Transverse colon (tissue), 4 donors: ENCODE measurements at regions of chr17 and their contacts with region 1.

Region 1: GRCh38 chr17:68556556-68556955 is 44.3 kb downstream of the PRKAR1A start:
- DNase-seq: no peak
- H3K4me3 ChIP-seq: no peak overlapping the region
- H3K27ac ChIP-seq: no peak overlapping the region
- H3K4me1 ChIP-seq: no peaks in the 10 kb centered on the region
- H3K27me3 ChIP-seq: no peaks in the 10 kb centered on the region
- CTCF ChIP-seq: no peak
- EP300 ChIP-seq: no peak
- POLR2A ChIP-seq: no peak

Region 2: DNA sequence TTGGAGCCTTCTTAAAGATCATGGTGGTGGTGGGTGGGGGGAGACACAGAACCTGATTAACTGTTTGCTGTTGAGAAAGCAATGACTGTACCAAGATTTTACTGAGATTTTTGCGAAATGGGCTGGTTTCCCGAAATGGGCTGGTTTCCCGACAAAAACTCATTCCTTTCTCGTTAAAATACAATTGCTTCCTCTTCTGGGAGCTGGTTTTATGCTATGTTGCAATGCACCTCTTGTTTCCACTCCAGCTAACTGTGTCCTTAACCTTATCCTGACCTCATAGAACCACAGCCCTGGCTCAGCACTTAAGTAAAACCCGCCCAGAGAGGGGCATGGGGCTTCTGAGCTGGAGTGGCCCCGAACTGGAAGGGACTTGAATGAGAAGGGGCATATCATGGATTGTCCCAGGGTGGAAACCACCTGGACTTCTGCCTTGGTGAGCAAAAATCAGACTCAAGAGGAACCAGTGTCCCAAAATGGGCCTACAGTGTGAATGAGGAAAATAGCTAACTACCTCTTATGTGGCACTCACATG is 23.7 kb after region 1 on chr17:
- in situ Hi-C with region 1: no loop called
- intact Hi-C with region 1: loop called (anchors 2 kb)
- DNase-seq: no peak
- H3K4me3 ChIP-seq: no peak overlapping the region
- H3K27ac ChIP-seq: peak overlapping the region in 3 of 4 donors; percentile 13 to 22 (median 20)
- H3K4me1 ChIP-seq: peaks cover 0 to 6% (median 0%) of the 10 kb centered on the region in 4 donors
- H3K27me3 ChIP-seq: no peaks in the 10 kb centered on the region
- CTCF ChIP-seq: no peak
- EP300 ChIP-seq: no peak
- POLR2A ChIP-seq: no peak

Region 3: GRCh38 chr17:68634403-68634802 is 77.8 kb after region 1 on chr17:
- in situ Hi-C with region 1: no loop called
- intact Hi-C with region 1: no loop called
- DNase-seq: no peak
- H3K4me3 ChIP-seq: no peak overlapping the region
- H3K27ac ChIP-seq: no peak overlapping the region
- H3K4me1 ChIP-seq: no peaks in the 10 kb centered on the region
- H3K27me3 ChIP-seq: no peaks in the 10 kb centered on the region
- CTCF ChIP-seq: no peak
- EP300 ChIP-seq: no peak
- POLR2A ChIP-seq: no peak

Region 4: GRCh38 chr17:69078864-69079263 is 522.3 kb after region 1 on chr17:
- in situ Hi-C with region 1: no loop called
- intact Hi-C with region 1: no loop called
- DNase-seq: no peak
- H3K4me3 ChIP-seq: no peak overlapping the region
- H3K27ac ChIP-seq: no peak overlapping the region
- H3K4me1 ChIP-seq: no peaks in the 10 kb centered on the region
- H3K27me3 ChIP-seq: no peaks in the 10 kb centered on the region
- CTCF ChIP-seq: no peak
- EP300 ChIP-seq: no peak
- POLR2A ChIP-seq: no peak